Activated CD8-positive, alpha-beta T cell treated with anti-CD3 and anti-CD28 coated beads for 36 hours (primary cell): ENCODE measurements at regions of chr3 and their contacts with region 1.

Region 1: DNA sequence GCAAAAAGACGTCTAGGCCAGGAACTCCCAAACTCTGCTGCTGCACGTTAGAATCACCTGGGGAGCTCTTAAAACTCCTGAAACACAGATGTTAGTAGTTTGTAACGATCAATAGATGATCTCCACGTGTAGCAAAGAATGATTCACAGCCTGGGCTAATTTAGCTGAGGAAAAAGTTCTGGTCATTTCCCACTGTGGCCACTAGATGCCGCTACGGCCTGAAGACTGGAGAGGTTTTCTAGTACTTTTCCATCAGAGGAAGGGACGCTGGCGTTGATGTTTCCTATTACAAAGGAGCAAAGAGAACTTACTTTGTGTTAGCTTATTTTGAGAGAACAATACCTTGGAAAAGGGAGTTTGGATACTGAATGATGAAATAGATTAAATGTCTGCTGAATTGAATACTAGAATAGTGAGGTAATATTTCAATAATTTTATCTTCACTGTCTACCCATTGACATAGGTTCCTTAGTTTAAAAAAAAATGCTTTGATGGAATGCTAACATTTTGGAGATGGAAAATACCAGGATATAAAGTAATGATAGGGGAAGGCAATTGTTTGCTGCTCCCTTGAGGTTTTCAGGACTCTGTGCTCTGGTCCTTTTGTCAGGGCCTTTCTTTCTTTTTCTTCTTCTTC is 159.1 kb downstream of the P3H2 start:
- DNase-seq: peak; percentile 85
- ATAC-seq: peak; percentile 90
- H3K4me3 Mint-ChIP-seq: no peak overlapping the region
- H3K27ac Mint-ChIP-seq: no peak overlapping the region
- H3K4me1 Mint-ChIP-seq: peaks cover 5% of the 10 kb centered on the region
- H3K27me3 Mint-ChIP-seq: peaks cover 12% of the 10 kb centered on the region
- CTCF ChIP-seq: peak; percentile 88

Region 2: DNA sequence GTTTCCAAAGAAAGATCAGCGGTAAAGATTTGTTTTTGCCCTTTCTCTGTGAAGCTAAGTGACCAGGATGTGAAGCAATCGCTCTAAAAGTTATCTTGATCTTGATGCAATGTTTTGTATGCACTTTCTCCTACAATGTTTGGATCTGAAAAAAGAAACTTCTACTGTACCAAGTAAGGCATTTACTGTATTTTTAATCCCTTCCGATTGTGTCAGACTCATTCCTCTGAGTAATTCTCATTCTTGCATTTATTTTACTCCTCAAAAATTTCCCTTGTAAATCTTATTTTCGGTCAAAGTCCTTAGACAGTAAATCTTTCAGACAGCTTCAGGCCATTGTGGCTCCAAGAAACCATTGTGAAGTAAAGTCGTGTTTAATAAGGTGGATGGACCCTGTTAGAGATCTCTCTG is 188.6 kb before region 1 on chr3:
- CTCF ChIA-PET with region 1: no interaction called
- POLR2A ChIA-PET with region 1: no interaction called
- intact Hi-C with region 1: no loop called
- DNase-seq: no peak
- ATAC-seq: no peak
- H3K4me3 Mint-ChIP-seq: no peak overlapping the region
- H3K27ac Mint-ChIP-seq: no peak overlapping the region
- H3K4me1 Mint-ChIP-seq: no peaks in the 10 kb centered on the region
- H3K27me3 Mint-ChIP-seq: peaks cover 3% of the 10 kb centered on the region
- CTCF ChIP-seq: no peak

Region 3: GRCh38 chr3:189947948-189948723 is 13.5 kb before region 1 on chr3:
- CTCF ChIA-PET with region 1: interaction called, 29 read pairs
- POLR2A ChIA-PET with region 1: interaction called, 4 read pairs
- intact Hi-C with region 1: no loop called
- DNase-seq: peak; percentile 15
- ATAC-seq: peak; percentile 37
- H3K4me3 Mint-ChIP-seq: no peak overlapping the region
- H3K27ac Mint-ChIP-seq: no peak overlapping the region
- H3K4me1 Mint-ChIP-seq: peaks cover 3% of the 10 kb centered on the region
- H3K27me3 Mint-ChIP-seq: peaks cover 4% of the 10 kb centered on the region
- CTCF ChIP-seq: peak; percentile 64

Region 4: DNA sequence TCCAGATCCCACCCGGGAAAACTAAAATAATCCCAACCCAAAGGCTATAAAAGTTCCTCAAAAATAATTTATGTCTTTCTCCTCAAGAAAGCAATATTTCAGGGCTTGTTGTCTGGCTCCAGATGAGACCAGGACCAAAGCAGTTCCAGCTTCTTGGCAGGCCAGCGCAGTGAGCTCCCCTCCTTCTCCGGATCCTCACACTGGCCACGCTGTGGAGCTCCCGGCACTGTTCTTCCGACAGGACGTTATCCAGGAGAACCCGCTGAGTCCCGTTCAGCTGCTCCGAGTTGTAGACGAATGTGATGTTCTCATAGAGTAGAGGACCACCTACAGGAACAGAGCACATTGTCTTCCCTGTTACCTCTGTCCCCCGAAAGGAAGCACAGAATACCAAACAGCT is 12.7 kb after region 1 on chr3:
- CTCF ChIA-PET with region 1: interaction called, 33 read pairs
- POLR2A ChIA-PET with region 1: no interaction called
- intact Hi-C with region 1: no loop called
- DNase-seq: no peak
- ATAC-seq: no peak
- H3K4me3 Mint-ChIP-seq: no peak overlapping the region
- H3K27ac Mint-ChIP-seq: no peak overlapping the region
- H3K4me1 Mint-ChIP-seq: no peaks in the 10 kb centered on the region
- H3K27me3 Mint-ChIP-seq: peaks cover 24% of the 10 kb centered on the region
- CTCF ChIP-seq: no peak

Region 5: GRCh38 chr3:190205739-190206138 is 244.1 kb after region 1 on chr3:
- CTCF ChIA-PET with region 1: interaction called, 24 read pairs
- POLR2A ChIA-PET with region 1: no interaction called
- intact Hi-C with region 1: loop called (anchors 2 kb)
- DNase-seq: no peak
- ATAC-seq: peak; percentile 79
- H3K4me3 Mint-ChIP-seq: no peak overlapping the region
- H3K27ac Mint-ChIP-seq: no peak overlapping the region
- H3K4me1 Mint-ChIP-seq: peaks cover 16% of the 10 kb centered on the region
- H3K27me3 Mint-ChIP-seq: peaks cover 23% of the 10 kb centered on the region
- CTCF ChIP-seq: no peak

Region 6: DNA sequence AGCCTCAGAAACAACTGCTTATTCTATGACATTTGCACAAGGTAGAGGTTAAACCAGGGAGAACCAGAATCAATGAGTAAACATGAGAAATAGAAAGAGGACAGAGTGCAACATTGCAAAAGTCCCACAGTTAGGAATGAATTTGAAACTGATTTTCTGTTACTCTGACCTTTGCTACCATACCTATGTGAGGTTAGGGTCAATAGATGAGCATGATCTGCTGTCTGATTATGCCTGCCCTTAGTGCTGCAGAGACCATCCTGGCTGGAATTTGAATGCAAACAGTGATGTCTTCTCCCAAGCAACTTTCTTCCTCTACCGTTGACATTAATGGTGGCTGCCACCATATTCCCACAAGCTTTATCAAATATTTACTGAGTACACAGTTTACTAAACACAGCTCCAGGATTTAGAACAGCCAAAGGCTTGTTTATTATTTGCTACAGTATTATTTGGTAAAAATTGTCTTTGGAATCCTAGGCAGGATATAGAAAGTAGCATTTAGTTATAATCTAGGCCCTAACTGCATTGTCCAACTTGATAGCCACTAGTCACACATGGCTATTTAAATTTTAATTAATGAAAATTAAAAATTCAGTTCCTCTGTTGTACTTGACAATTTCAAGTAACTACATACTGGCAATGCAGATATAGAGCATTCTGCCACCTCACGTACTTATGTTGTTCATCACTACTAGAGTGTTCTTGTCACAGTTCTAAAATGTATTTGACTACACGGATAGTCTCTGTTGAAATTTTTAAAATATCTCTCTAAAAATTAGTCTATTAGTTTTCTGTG is 369.5 kb after region 1 on chr3:
- CTCF ChIA-PET with region 1: interaction called, 11 read pairs
- POLR2A ChIA-PET with region 1: no interaction called
- intact Hi-C with region 1: loop called (anchors 10 kb)
- DNase-seq: no peak
- ATAC-seq: no peak
- H3K4me3 Mint-ChIP-seq: no peak overlapping the region
- H3K27ac Mint-ChIP-seq: no peak overlapping the region
- H3K4me1 Mint-ChIP-seq: no peaks in the 10 kb centered on the region
- H3K27me3 Mint-ChIP-seq: peaks cover 25% of the 10 kb centered on the region
- CTCF ChIP-seq: no peak

Region 7: GRCh38 chr3:190424478-190425439 is 463.1 kb after region 1 on chr3:
- CTCF ChIA-PET with region 1: interaction called, 12 read pairs
- POLR2A ChIA-PET with region 1: no interaction called
- intact Hi-C with region 1: loop called (anchors 5 kb)
- DNase-seq: peak; percentile 66
- ATAC-seq: peak; percentile 77
- H3K4me3 Mint-ChIP-seq: no peak overlapping the region
- H3K27ac Mint-ChIP-seq: no peak overlapping the region
- H3K4me1 Mint-ChIP-seq: peaks cover 6% of the 10 kb centered on the region
- H3K27me3 Mint-ChIP-seq: peaks cover 2% of the 10 kb centered on the region
- CTCF ChIP-seq: peak; percentile 75